ENCODE measurements at regions of chr12 and their contacts with region 1.

Region 1: DNA sequence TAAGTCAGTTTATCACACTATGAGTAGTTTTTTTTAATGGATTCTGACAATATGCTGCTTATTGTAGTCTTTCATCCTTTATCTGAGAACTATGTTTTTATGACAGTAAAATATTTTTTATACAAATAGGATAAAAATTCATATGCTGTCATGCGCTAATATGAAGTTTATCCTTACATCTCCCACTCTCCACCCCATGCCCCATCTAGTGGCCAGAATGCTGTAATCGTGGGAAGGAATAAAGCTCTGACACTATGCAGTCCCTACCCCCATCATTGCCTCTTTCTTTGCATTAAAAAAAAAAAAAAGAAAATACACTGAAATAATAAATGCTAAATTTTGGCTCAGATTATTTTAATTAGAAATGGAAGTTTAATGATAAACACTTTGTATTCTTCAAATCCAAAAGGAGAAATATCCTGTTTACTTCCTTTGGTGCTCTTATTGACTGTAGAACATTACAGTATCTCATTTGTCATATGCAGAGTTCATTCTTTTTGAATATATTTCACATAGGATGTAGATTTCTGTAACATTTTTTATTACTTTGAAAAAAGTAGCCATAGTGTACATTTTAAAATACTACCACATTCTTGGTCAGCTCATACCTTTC is 145.9 kb upstream of the SLCO1C1 start:
- DNase-seq: peak in 1 of 2 donors; percentile 49
- ATAC-seq: no peak
- H3K4me3 ChIP-seq: no peak overlapping the region
- H3K27ac ChIP-seq: no peak overlapping the region
- H3K4me1 ChIP-seq: peaks cover 0 to 3% of the 10 kb centered on the region in 2 donors
- H3K27me3 ChIP-seq: no peaks in the 10 kb centered on the region

Region 2: DNA sequence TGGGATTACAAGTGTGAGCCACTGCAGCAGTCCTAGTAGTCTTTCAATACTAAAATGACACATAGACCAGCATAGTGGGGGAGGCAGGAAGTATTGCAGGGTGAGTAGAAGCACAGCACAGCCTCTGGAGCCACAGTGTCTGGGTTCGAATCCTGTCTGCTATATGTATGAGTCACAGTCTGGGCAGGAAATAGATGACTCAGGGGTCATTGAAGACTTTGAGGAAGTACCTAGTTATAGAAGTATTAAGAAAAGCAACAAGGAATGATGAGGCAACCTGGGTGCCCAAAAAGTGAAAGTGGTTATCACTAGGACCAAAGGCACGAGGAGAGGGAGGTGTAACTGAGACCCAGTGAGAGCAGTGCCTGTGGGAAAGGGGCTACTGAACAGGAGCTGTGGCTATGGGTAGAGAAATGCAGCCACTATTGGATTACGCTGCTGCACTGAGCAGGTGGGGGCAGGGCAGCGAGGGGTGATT is 56.9 kb before region 1 on chr12:
- intact Hi-C with region 1: loop called in 1 of 2 experiments (anchors 10 kb)
- DNase-seq: peak in 1 of 2 donors; percentile 46
- ATAC-seq: no peak
- H3K4me3 ChIP-seq: no peak overlapping the region
- H3K27ac ChIP-seq: peak overlapping the region in 1 of 2 donors; percentile 89
- H3K4me1 ChIP-seq: peaks cover 6 to 20% of the 10 kb centered on the region in 2 donors
- H3K27me3 ChIP-seq: no peaks in the 10 kb centered on the region

Measured in aorta (tissue), 5 donors.